WTC11 (cell line): ENCODE measurements at regions of chr22 and their contacts with region 1.

Region 1: DNA sequence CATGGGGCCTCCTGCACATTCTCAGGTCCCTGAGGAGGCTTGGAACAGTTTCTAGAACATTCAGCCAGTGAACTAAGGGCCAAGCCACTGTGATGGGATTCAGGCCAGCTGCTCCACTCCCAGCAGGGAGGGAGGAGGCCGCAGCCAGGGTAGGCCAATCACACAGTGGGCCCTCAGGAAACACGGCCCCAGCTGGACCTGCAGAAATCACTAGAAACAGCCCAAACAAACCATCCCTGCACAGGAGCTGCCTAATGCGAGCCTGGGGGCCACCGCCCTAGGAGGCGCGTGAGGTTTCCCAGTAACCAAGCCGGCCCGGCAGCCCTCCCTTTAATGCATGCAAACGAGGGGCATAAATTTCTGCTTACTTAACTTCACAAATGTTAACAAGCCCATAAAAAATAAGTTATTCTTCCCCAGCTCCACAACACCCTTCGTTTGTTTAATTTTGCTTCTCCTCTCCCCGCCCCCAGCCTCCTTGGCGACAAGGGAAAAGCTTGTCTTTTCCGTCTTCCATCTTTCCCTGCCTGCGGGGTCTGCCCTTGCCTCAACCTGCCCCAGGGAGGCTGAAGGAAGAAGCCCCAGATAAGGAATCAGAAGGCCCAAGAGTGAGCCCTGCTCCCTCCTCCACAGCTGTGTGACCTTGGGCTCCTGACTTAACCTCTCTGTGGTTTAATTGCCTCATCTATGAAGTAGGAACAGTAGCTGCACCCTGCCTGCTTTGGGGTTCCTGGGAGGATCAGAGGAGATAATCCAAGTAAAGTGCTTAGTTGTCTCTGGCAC is 25.7 kb downstream of the ELFN2 start:
- DNase-seq: no peak
- ATAC-seq: no peak
- H3K4me3 Mint-ChIP-seq: no peak overlapping the region
- H3K27ac Mint-ChIP-seq: no peak overlapping the region
- H3K4me1 Mint-ChIP-seq: peaks cover 22% of the 10 kb centered on the region
- H3K27me3 Mint-ChIP-seq: no peaks in the 10 kb centered on the region
- CTCF ChIP-seq: no peak

Region 2: DNA sequence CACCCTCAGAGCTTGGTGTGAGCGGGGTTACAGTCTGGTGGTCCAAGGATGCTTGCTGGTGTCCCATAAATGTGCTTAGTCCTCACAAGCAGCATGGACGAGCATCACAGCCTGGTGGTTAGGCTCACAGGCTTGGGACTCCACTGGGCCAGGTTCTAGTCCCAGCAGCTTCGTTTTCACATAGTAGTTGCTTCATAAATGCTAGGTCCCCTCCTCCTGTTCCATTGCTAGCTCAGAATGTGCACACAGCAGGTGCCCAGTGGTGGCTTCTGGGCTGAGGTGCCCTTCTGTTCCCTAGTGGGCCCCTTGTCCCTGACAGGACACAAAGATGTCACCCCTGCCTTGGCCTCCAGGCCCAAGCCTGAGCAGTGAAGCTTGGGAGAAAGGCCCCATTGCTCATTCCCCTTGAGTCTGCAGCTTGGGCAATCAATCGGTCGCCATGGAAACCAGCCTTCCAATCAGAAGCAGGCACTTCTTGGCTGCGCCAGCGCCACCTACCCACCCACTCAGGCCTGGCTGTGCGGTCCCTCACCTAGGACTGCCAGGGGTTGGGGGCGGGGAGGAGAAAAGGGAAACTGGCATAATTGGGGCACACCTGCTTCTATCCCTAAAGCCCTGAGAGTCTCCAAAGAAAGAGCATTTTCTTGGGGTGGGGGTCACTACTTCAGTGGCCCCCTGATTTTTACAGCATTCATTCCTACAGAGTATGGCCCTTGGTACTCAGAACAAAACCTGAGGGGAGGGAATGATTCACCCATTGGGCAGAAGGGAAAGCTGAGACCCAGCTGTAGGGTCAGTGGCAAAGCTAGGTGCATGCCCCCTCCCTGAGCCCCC is 71.2 kb before region 1 on chr22:
- CTCF ChIA-PET with region 1: interaction called, 12 read pairs
- POLR2A ChIA-PET with region 1: no interaction called
- DNase-seq: peak; percentile 91
- ATAC-seq: peak; percentile 84
- H3K4me3 Mint-ChIP-seq: no peak overlapping the region
- H3K27ac Mint-ChIP-seq: no peak overlapping the region
- H3K4me1 Mint-ChIP-seq: peaks cover 29% of the 10 kb centered on the region
- H3K27me3 Mint-ChIP-seq: peaks cover 43% of the 10 kb centered on the region
- CTCF ChIP-seq: no peak